Caco-2 (cell line): ENCODE measurements at regions of chr14 and their contacts with region 1.

Region 1: GRCh38 chr14:59177254-59177653 is 11.2 kb upstream of the DAAM1 start:
- DNase-seq: peak in 1 of 2 experiments; percentile 9
- H3K4me3 ChIP-seq: no peak overlapping the region
- H3K4me3 Mint-ChIP-seq: no peak overlapping the region
- H3K27ac Mint-ChIP-seq: no peak overlapping the region
- H3K4me1 ChIP-seq: no peaks in the 10 kb centered on the region
- H3K4me1 Mint-ChIP-seq: no peaks in the 10 kb centered on the region
- H3K27me3 ChIP-seq: no peaks in the 10 kb centered on the region; the same call in 1 of the 2 replicates
- H3K27me3 Mint-ChIP-seq: no peaks in the 10 kb centered on the region
- CTCF ChIP-seq: no peak

Region 2: GRCh38 chr14:59140106-59140843 is 37.0 kb before region 1 on chr14:
- CTCF ChIA-PET with region 1: no interaction called
- POLR2A ChIA-PET with region 1: no interaction called
- intact Hi-C with region 1: no loop called
- DNase-seq: no peak
- H3K4me3 ChIP-seq: no peak overlapping the region
- H3K4me3 Mint-ChIP-seq: no peak overlapping the region
- H3K27ac Mint-ChIP-seq: no peak overlapping the region
- H3K4me1 ChIP-seq: no peaks in the 10 kb centered on the region
- H3K4me1 Mint-ChIP-seq: no peaks in the 10 kb centered on the region
- H3K27me3 ChIP-seq: no peaks in the 10 kb centered on the region
- H3K27me3 Mint-ChIP-seq: peaks cover 19% of the 10 kb centered on the region
- CTCF ChIP-seq: no peak

Region 3: GRCh38 chr14:59360923-59361794 is 183.9 kb after region 1 on chr14:
- CTCF ChIA-PET with region 1: no interaction called
- POLR2A ChIA-PET with region 1: interaction called, 10 read pairs
- intact Hi-C with region 1: no loop called
- DNase-seq: peak; percentile 70 to 80
- H3K4me3 ChIP-seq: no peak overlapping the region
- H3K4me3 Mint-ChIP-seq: no peak overlapping the region
- H3K27ac Mint-ChIP-seq: no peak overlapping the region
- H3K4me1 ChIP-seq: peaks cover 12% of the 10 kb centered on the region
- H3K4me1 Mint-ChIP-seq: peaks cover 9% of the 10 kb centered on the region
- H3K27me3 ChIP-seq: no peaks in the 10 kb centered on the region
- H3K27me3 Mint-ChIP-seq: no peaks in the 10 kb centered on the region
- CTCF ChIP-seq: no peak